PC-9 (cell line): ENCODE measurements at regions of chr1 and their contacts with region 1.

Region 1: GRCh38 chr1:218345673-218346390 is 696 bp downstream of the TGFB2 start:
- DNase-seq: peak; percentile 51 to 64
- H3K4me3 ChIP-seq: peak overlapping the region; percentile 98
- H3K27ac ChIP-seq: peak overlapping the region; percentile 85
- H3K4me1 ChIP-seq: peaks cover 40% of the 10 kb centered on the region
- H3K27me3 ChIP-seq: no peaks in the 10 kb centered on the region
- CTCF ChIP-seq: no peak

Region 2: DNA sequence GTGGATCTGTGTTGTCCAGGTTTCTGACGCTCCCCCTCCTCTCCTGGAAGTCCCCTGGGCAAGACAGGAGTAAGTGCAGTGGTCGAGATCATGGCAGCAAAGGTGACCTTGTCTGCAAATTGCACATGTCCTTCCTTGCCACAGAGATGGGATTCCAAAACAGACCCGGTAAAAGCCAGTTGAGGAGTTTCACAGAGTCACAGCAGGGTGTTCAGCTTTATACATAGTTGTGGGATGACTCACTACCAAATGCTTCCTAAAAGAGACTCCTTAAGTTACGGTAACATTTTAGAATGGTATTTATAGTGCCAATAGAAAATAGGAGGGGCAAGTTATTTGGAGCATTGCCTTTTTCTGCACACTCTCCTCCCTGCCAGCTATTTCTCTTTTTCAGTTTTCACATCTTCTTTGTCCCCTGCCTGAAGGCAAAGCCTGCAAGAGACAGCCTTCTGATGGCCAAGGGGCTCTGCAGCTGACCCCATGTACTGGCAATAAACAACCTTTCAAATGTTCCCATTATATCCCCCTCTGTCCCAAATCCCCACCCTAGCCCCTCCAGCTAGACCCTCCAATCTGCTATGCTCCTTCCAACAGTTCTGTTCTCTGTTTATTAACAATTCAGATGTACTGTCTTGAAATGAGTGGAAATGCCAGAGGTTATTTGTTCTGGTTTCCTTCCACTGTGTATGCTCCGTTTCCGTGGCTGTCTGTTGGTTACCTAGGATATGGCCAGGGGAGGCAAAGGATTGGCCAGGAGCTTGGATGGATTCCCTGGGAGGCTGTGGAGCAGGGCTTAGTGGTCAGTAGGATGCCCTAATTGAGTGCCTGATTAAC is 114.3 kb after region 1 on chr1:
- CTCF ChIA-PET with region 1: no interaction called
- POLR2A ChIA-PET with region 1: interaction called, 6 read pairs
- intact Hi-C with region 1: loop called (anchors 1 kb)
- DNase-seq: peak; percentile 68 to 93
- H3K4me3 ChIP-seq: no peak overlapping the region
- H3K27ac ChIP-seq: peak overlapping the region; percentile 63
- H3K4me1 ChIP-seq: peaks cover 14% of the 10 kb centered on the region
- H3K27me3 ChIP-seq: no peaks in the 10 kb centered on the region
- CTCF ChIP-seq: no peak

Region 3: GRCh38 chr1:218488986-218489385 is 143.2 kb after region 1 on chr1:
- CTCF ChIA-PET with region 1: no interaction called
- POLR2A ChIA-PET with region 1: interaction called, 20 read pairs
- intact Hi-C with region 1: loop called (anchors 2 kb)
- DNase-seq: peak; percentile 69 to 98
- H3K4me3 ChIP-seq: no peak overlapping the region
- H3K27ac ChIP-seq: peak overlapping the region; percentile 92
- H3K4me1 ChIP-seq: peaks cover 75% of the 10 kb centered on the region
- H3K27me3 ChIP-seq: no peaks in the 10 kb centered on the region
- CTCF ChIP-seq: no peak

Region 4: GRCh38 chr1:218674280-218674773 is 328.5 kb after region 1 on chr1:
- CTCF ChIA-PET with region 1: no interaction called
- POLR2A ChIA-PET with region 1: interaction called, 5 read pairs
- intact Hi-C with region 1: loop called (anchors 1 kb)
- DNase-seq: peak; percentile 90 to 92
- H3K4me3 ChIP-seq: no peak overlapping the region
- H3K27ac ChIP-seq: no peak overlapping the region
- H3K4me1 ChIP-seq: 0 out of 2 replicates have a peak, but pooled peaks cover 13% of the 10 kb centered on the region
- H3K27me3 ChIP-seq: no peaks in the 10 kb centered on the region
- CTCF ChIP-seq: no peak

Region 5: GRCh38 chr1:219173758-219174588 is 828.1 kb after region 1 on chr1 and contains the start of gene LYPLAL1:
- CTCF ChIA-PET with region 1: no interaction called
- POLR2A ChIA-PET with region 1: no interaction called
- intact Hi-C with region 1: loop called (anchors 5 kb)
- DNase-seq: peak; percentile 70 to 92
- H3K4me3 ChIP-seq: peak within 1 kb of the TSS; percentile 74
- H3K27ac ChIP-seq: peak within 1 kb of the TSS; percentile 59
- H3K4me1 ChIP-seq: peaks cover 30% of the 10 kb centered on the region
- H3K27me3 ChIP-seq: no peaks in the 10 kb centered on the region
- CTCF ChIP-seq: no peak
- total RNA-seq, gene LYPLAL1: 39.3 and 57.0 TPM in 2 replicates